Ascending aorta (tissue), 2 donors: ENCODE measurements at regions of chrX and their contacts with region 1.

Region 1: DNA sequence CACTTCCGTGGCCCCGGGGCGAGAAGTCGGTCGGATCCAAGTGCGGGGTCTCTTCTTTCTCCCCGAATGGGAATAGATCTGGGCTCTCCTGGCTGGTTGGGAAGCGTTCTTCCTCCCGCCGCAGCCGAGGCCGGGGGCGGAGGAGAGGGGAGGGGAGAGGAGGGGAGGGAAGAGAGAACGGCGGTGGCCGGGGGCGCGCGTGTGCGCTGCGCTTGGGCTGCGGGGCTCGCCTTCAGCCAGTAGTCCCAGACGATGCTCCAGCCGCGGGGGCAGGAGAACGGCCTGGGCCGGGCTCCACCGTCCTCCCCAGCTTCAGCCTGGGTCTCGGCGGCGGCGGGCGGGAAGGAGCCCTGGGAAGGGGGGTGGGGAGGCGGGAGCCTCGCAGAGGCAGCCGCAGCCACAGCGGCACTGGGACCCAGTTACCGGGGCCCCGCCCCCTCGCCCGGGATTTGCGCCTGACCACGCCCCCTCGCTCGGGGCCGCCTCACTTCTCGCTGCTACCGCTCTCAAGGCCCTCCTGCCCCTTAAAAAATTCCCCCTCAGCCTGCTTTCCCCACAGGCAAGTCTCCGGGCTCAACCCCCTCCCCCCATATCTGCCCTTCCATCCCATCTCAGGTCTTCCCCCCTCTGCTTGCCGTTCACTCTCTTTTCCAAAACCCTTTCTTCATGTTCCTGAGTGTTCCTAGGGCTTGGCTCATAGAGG is at the start of gene FGD1:
- DNase-seq: peak in 1 of 2 donors; percentile 76
- H3K4me3 ChIP-seq: peak within 1 kb of the TSS; percentile 74 to 79
- H3K27ac ChIP-seq: peak within 1 kb of the TSS; percentile 73 to 84
- H3K4me1 ChIP-seq: peaks cover 0 to 3% of the 10 kb centered on the region in 2 donors
- H3K27me3 ChIP-seq: no peaks in the 10 kb centered on the region
- CTCF ChIP-seq: no peak
- total RNA-seq, gene FGD1: 16.5 TPM

Region 2: DNA sequence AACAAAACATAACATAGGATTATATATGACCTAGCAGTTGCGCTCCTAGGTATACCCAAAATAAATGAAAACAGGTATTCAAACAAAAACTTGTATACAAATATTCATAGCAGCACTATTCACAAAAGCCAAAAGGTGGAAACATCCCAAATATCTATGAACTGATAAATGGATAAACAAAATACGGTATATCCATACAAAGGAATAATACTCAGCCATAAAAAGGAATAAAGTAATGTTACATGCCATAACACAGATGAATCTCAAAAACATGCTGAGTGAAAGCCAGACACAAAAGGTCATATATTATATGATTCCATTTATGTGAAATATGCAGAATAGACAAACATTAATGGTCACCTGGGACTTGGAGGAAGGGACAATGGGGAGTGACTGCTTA is 143.3 kb before region 1 on chrX:
- intact Hi-C with region 1: no loop called
- DNase-seq: no peak
- H3K4me3 ChIP-seq: no peak overlapping the region
- H3K27ac ChIP-seq: no peak overlapping the region
- H3K4me1 ChIP-seq: no peaks in the 10 kb centered on the region
- H3K27me3 ChIP-seq: no peaks in the 10 kb centered on the region
- CTCF ChIP-seq: no peak

Region 3: DNA sequence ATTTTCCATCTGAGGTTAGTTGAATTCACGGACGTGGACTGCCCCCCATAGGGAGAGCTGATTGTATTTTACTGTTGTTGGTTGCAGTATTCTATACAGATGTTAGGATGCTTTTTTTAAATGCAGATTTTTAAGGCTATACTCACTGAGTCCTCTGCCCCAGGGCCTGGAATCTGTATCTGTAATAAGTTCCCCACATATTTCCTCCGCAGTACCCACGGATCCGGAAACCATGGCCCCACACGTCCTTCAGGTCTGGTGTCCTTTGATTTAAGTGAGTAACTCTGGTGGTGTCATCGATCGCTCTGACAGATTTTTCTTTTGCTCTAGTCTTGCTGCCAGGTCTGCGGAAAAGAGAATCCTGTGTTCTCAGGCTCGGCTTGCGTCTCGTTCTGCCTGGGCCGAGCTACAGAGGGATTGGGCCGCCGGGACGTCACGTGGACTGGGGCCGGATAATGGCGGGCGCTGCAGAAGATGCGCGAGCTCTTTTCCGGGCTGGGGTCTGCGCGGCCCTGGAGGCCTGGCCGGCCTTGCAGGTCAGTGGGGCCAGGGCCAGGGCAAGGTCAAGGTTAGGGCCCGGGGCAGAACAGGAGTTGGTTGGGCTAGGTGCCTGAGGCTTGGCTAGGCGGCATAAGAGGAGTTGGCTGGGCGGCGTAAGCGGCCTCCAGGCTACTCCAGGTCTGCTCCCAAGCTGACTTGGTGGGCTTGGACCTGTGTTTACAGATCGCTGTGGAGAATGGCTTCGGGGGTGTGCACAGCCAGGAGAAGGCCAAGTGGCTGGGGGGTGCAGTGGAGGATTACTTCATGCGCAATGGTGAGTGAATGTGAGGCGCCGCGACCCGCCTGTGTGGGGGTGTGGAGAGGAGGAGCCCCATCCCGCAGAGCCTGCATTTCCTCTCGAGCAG is 55.7 kb before region 1 on chrX and contains the start of gene TSR2:
- intact Hi-C with region 1: loop called (anchors 1 kb)
- DNase-seq: peak; percentile 63 to 88
- H3K4me3 ChIP-seq: peak within 1 kb of the TSS; percentile 54 to 89
- H3K27ac ChIP-seq: peak within 1 kb of the TSS; percentile 38 to 56
- H3K4me1 ChIP-seq: peaks cover 0 to 6% of the 10 kb centered on the region in 2 donors
- H3K27me3 ChIP-seq: no peaks in the 10 kb centered on the region
- CTCF ChIP-seq: peak in 1 of 3 experiments; percentile 26
- total RNA-seq, gene TSR2: 14.0 TPM

Region 4: GRCh38 chrX:54482839-54483593 is 12.9 kb before region 1 on chrX:
- intact Hi-C with region 1: loop called (anchors 2 kb)
- DNase-seq: no peak
- H3K4me3 ChIP-seq: peak overlapping the region; percentile 26 to 51
- H3K27ac ChIP-seq: peak overlapping the region; percentile 67 to 69
- H3K4me1 ChIP-seq: peaks cover 0 to 3% of the 10 kb centered on the region in 2 donors
- H3K27me3 ChIP-seq: no peaks in the 10 kb centered on the region
- CTCF ChIP-seq: no peak